K562 (cell line): ENCODE measurements at regions of chr16 and their contacts with region 1.

Region 1: DNA sequence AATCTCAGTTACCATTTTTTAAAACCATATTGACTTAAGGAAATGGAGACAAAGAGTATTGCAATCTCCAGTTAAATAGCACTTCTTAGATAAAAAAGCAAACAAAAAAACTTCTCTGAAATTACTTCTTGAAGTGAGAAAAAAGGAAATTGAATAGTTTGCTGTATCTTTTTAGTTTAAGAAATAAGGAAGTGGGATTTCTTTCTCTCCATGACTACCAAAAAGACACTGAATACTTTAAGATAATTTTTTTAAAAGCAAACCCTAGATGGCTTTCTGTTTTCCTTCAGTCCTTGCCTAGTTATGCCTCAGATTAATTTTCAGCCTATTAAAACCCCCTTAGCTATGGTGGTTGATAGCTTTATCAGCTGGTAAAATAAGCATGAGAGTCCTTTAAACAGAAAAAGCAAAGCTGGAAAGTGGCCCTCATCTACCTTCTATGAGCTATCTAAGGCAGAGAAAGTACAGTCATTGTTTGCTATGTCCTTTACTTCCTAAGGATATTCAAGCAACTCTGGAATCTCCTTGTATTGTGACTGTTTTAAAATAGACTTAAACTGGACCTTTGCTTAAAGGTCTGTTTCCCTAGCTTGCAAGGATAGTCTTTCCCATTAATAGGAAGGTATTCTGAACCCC is 28.6 kb downstream of the TPPP3 start:
- DNase-seq: no peak
- ATAC-seq: no peak
- H3K4me3 ChIP-seq: no peak overlapping the region
- H3K27ac ChIP-seq: no peak overlapping the region
- H3K4me1 ChIP-seq: no peaks in the 10 kb centered on the region
- H3K27me3 ChIP-seq: peaks cover 15 to 17% of the 10 kb centered on the region in 2 experiments; a peak in 4 of 5 replicates
- CTCF ChIP-seq: no peak
- EP300 ChIP-seq: no peak
- POLR2A ChIP-seq: no peak
- RAD21 ChIP-seq: no peak

Region 2: GRCh38 chr16:66977341-66978113 is 387.2 kb before region 1 on chr16:
- CTCF ChIA-PET with region 1: no interaction called
- POLR2A ChIA-PET with region 1: no interaction called
- in situ Hi-C with region 1: no loop called
- intact Hi-C with region 1: no loop called
- DNase-seq: peak; percentile 89 to 93 (median 92)
- ATAC-seq: peak; percentile 98
- H3K4me3 ChIP-seq: no peak overlapping the region
- H3K27ac ChIP-seq: no peak overlapping the region
- H3K4me1 ChIP-seq: peaks cover 3 to 26% of the 10 kb centered on the region in 2 experiments; a peak in 4 of 5 replicates
- H3K27me3 ChIP-seq: no peaks in the 10 kb centered on the region
- CTCF ChIP-seq: peak; percentile 94 to 98 (median 97)
- EP300 ChIP-seq: no peak
- POLR2A ChIP-seq: no peak
- RAD21 ChIP-seq: peak; percentile 95 to 98

Region 3: DNA sequence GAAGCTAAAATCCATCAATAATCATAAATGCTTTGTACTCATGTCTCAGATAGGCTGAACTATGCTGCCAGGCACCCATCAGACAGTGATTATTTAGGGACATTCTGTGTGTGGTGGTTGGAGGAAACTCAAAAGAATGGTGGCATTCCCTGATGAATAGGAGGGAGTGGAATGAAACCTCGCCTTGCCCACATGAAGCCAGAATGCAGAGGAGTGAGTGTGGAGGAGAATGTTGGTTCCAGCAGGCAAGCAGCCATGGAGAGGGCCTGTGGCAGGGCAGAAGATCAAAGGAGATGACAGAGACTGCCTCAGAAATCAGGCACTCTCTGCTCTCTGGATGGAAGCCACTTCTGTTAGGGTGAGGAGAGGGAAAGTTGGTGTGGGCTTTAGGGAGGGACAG is 60.7 kb before region 1 on chr16:
- CTCF ChIA-PET with region 1: no interaction called
- POLR2A ChIA-PET with region 1: no interaction called
- in situ Hi-C with region 1: no loop called
- intact Hi-C with region 1: no loop called
- DNase-seq: no peak
- ATAC-seq: no peak
- H3K4me3 ChIP-seq: no peak overlapping the region
- H3K27ac ChIP-seq: no peak overlapping the region
- H3K4me1 ChIP-seq: peaks cover 0 to 10% of the 10 kb centered on the region in 2 experiments; a peak in 1 of 5 replicates
- H3K27me3 ChIP-seq: peaks cover 4 to 6% of the 10 kb centered on the region in 2 experiments; a peak in 4 of 5 replicates
- CTCF ChIP-seq: no peak
- EP300 ChIP-seq: no peak
- POLR2A ChIP-seq: no peak
- RAD21 ChIP-seq: no peak

Region 4: DNA sequence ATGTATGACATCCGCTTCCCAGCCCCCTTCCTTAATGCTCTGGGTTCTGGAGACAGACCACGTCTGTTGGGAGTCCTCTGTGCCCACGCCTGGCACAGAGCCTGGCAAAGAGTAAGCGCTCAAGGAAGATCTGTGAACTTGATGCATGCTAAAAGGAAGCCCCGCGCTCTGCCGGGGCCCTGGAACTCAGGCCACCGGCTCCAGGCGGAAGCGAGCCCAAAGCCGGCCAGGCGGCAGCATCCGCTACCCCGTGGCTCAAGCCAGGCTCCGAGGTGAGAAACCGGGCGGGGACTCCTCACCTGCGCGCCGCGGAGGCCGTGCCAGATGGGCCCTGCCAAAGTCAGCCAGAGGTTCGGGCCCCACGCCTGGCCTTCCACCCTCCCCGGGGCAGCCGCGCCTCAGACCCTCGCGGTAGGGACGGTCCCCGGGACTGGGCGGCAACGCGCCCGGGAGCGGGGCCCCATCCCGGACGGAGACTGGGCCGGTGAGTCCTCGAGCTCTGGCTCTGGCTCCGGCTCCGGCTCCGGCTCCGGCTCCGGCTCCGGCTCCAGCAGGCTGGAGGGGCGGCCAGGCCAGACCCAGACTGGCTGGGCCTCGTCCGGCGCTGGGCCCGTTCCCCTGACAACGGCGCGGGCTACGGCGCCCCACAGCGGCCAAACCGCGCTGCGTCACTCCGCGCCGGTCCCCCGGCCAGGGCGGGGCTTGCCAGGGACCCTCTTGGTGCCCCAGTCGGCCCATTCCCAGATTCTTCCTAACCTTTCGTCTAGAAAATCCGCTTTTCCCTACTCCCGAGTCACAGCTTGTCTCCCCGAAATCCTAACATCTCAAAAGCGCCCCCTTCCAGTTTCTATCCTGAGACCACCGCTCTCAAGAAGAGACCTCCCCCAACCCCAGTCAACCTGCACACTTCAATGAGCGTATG is 51.4 kb after region 1 on chr16 and contains the start of gene ZDHHC1:
- CTCF ChIA-PET with region 1: no interaction called
- POLR2A ChIA-PET with region 1: no interaction called
- in situ Hi-C with region 1: no loop called
- intact Hi-C with region 1: loop called (anchors 10 kb)
- DNase-seq: peak in 3 of 4 experiments; percentile 55 to 74 (median 72)
- ATAC-seq: peak; percentile 92
- H3K4me3 ChIP-seq: no peak within 1 kb of the TSS
- H3K27ac ChIP-seq: no peak within 1 kb of the TSS
- H3K4me1 ChIP-seq: peaks cover 0 to 9% of the 10 kb centered on the region in 2 experiments; a peak in 2 of 5 replicates
- H3K27me3 ChIP-seq: peaks cover 40 to 65% of the 10 kb centered on the region in 2 experiments
- CTCF ChIP-seq: peak; percentile 33 to 57 (median 50); a peak in 4 of 6 replicates
- EP300 ChIP-seq: no peak
- POLR2A ChIP-seq: no peak
- RAD21 ChIP-seq: peak in 1 of 2 experiments; percentile 52; a peak in 2 of 4 replicates
- polyA plus RNA-seq, gene ZDHHC1: not detected